Heart right ventricle (tissue), 16 donors: ENCODE measurements at regions of chr6 and their contacts with region 1.

Region 1: DNA sequence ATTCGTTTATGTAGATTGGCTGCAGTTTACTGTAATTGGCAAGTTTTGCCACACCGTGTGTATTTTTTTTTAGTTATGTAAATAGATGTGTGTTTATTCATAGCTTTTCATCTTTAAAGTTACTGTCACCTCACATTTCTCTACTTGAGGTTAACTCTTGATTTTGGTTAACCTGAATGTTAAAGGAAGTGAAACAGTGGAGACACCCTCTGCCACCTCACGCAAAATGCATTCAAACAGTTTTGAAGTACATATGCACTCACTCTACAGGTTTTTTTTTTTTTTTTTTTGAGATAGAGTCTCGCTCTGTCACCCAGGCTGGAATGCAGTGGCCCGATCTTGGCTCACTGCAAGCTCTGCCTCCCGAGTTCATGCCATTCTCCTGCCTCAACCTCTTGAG is 17.7 kb downstream of the OR2A4 start:
- DNase-seq: no peak
- ATAC-seq: no peak
- H3K4me3 ChIP-seq: no peak overlapping the region
- H3K27ac ChIP-seq: no peak overlapping the region
- H3K4me1 ChIP-seq: no peaks in the 10 kb centered on the region
- H3K27me3 ChIP-seq: no peaks in the 10 kb centered on the region
- CTCF ChIP-seq: no peak

Region 2: GRCh38 chr6:130138116-130138908 is 1545.2 kb before region 1 on chr6:
- intact Hi-C with region 1: loop called in 1 of 10 experiments (anchors 5 kb)
- DNase-seq: no peak
- ATAC-seq: no peak
- H3K4me3 ChIP-seq: no peak overlapping the region
- H3K27ac ChIP-seq: no peak overlapping the region
- H3K4me1 ChIP-seq: peaks cover 0 to 13% (median 0%) of the 10 kb centered on the region in 9 donors
- H3K27me3 ChIP-seq: no peaks in the 10 kb centered on the region
- CTCF ChIP-seq: no peak

Region 3: DNA sequence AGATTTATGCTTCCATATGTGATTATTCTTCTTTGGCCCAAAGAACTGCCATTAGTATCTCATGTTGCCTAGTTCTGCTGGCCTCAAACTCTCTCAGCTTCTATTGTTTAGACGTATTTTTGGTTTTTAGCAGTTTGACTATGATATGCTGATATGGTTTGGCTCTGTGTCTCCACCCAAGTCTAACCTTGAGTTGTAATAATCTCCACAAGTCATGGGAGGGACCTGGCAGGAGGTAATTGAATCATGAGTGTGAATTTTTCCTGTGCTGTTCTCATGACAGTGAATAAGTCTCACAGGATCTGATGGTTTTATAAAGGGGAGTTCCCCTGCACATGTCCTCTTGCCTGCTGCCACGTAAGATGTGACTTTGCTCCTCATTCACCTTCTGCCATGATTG is 207.1 kb before region 1 on chr6:
- intact Hi-C with region 1: no loop called
- DNase-seq: no peak
- ATAC-seq: no peak
- H3K4me3 ChIP-seq: no peak overlapping the region
- H3K27ac ChIP-seq: no peak overlapping the region
- H3K4me1 ChIP-seq: no peaks in the 10 kb centered on the region
- H3K27me3 ChIP-seq: no peaks in the 10 kb centered on the region
- CTCF ChIP-seq: no peak